ENCODE measurements at regions of chr2 and their contacts with region 1.

Region 1: GRCh38 chr2:11040992-11041391 is 114.3 kb upstream of the SLC66A3 start:
- DNase-seq: no peak
- ATAC-seq: no peak
- H3K4me3 ChIP-seq: no peak overlapping the region
- H3K4me3 Mint-ChIP-seq: no peak overlapping the region
- H3K27ac ChIP-seq: no peak overlapping the region
- H3K27ac Mint-ChIP-seq: no peak overlapping the region
- H3K4me1 ChIP-seq: no peaks in the 10 kb centered on the region
- H3K4me1 Mint-ChIP-seq: no peaks in the 10 kb centered on the region
- H3K27me3 ChIP-seq: peaks cover 2 to 16% of the 10 kb centered on the region in 2 experiments
- H3K27me3 Mint-ChIP-seq: peaks cover 44 to 52% of the 10 kb centered on the region in 2 donors

Region 2: DNA sequence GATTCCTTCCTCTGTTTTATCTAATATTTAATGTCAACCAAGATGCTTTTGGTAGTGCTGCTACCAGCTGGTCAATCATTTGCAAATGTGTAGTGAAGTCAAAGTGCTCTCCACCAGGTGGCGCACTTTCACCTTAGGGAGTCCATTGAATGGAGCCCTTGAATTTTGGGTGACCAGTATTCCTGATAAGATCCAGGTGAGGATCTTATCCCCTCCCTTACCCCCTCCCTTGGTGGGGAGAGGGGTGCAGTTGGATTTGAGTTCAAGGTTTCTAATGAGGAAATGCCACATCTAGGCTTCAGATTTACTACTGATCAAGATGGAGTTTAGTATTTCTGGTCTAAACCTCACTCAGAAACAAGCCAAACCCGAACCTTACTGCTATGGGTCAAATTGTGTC is 437.0 kb after region 1 on chr2:
- CTCF ChIA-PET with region 1: no interaction called
- POLR2A ChIA-PET with region 1: interaction called in 1 of 2 experiments, 11 read pairs
- DNase-seq: peak; percentile 42 to 88 (median 69)
- ATAC-seq: peak; percentile 57 to 70 (median 64)
- H3K4me3 ChIP-seq: no peak overlapping the region
- H3K4me3 Mint-ChIP-seq: no peak overlapping the region
- H3K27ac ChIP-seq: no peak overlapping the region
- H3K27ac Mint-ChIP-seq: no peak overlapping the region
- H3K4me1 ChIP-seq: peaks cover 0 to 8% of the 10 kb centered on the region in 2 experiments
- H3K4me1 Mint-ChIP-seq: peaks cover 1 to 5% (median 4%) of the 10 kb centered on the region in 3 donors
- H3K27me3 ChIP-seq: peaks cover 0 to 24% of the 10 kb centered on the region in 2 experiments
- H3K27me3 Mint-ChIP-seq: peaks cover 28 to 37% of the 10 kb centered on the region in 2 donors

Measured in T-cell (primary cell).